Transverse colon (tissue), 4 donors: ENCODE measurements at regions of chr6 and their contacts with region 1.

Region 1: DNA sequence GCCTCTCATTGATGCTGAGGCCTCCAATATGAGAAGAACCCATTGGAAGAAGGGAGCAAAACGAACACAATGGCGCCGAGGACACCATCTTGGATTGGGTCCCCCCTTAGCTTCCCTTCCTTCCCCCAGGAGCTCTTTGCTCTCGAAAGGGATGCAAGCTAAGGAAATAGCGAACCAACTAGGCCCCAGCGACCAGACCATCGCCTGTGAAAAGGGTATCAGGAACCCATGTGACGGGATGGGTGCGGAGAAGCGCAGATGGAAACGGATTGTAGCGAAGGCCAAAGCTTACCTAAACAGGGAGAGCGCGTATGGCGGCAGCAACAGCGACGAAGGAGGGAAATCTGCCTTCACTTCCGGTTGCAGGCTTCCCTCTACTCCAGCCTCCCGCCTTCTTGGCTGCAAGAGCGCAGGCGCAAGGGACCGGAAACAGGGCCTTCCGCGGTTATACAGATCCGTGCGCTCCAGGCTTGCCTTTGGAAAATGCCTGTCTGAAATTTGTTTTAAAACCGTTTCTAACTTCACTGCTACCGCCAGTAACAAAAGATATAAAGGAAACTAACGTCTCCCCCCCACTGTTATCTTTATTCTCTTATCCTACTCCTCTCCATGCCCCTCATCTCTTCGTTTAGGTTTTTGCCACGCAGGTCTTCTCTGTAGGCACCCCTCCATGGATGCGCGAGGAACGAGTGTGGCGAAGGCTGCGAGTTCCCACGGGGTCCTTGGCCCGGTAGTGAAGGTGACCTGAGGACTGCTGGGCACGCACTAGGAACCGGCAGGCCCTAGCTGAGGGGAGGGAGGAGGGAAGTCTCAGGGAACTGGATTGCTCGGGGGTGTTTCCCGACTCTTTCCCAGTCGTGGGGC is at the start of gene DDX39B:
- DNase-seq: peak; percentile 95
- H3K4me3 ChIP-seq: peak within 1 kb of the TSS; percentile 59 to 79 (median 66)
- H3K27ac ChIP-seq: peak within 1 kb of the TSS; percentile 93 to 97 (median 94)
- H3K4me1 ChIP-seq: peaks cover 22 to 41% (median 33%) of the 10 kb centered on the region in 4 donors
- H3K27me3 ChIP-seq: no peaks in the 10 kb centered on the region
- CTCF ChIP-seq: no peak
- EP300 ChIP-seq: no peak
- POLR2A ChIP-seq: peak; percentile 85
- total RNA-seq, gene DDX39B: 147 to 519 (median 271) TPM

Region 2: GRCh38 chr6:31493875-31494694 is 47.8 kb before region 1 on chr6:
- in situ Hi-C with region 1: loop called in 1 of 4 experiments (anchors 10 kb)
- intact Hi-C with region 1: no loop called
- DNase-seq: peak; percentile 89
- H3K4me3 ChIP-seq: peak overlapping the region; percentile 42 to 63 (median 52)
- H3K27ac ChIP-seq: peak overlapping the region; percentile 79 to 88 (median 84)
- H3K4me1 ChIP-seq: peaks cover 0 to 67% (median 17%) of the 10 kb centered on the region in 4 donors
- H3K27me3 ChIP-seq: peaks cover 4% of the 10 kb centered on the region
- CTCF ChIP-seq: peak; percentile 74 to 90 (median 78)
- EP300 ChIP-seq: no peak
- POLR2A ChIP-seq: peak; percentile 60

Region 3: DNA sequence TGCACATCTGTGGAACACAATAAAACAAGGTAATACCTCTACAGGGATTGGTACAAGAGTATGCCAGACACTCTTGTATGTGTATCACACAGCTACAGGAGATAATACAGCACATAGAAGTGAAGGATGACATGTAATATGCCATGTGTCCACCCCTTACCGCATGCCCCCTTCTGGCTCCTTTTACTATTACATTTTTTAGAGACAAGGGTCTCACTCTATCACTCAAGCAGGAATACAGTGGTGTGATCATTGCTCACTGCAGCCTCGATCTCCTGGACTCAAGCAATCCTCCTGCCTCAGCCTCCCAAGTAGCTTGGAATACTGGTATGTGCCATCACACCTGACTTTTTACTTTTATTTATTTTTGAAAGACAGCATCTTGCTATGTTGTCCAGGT is 55.1 kb after region 1 on chr6:
- in situ Hi-C with region 1: loop called in 3 of 4 experiments (anchors 5 to 10 kb)
- intact Hi-C with region 1: loop called (anchors 2 kb)
- DNase-seq: no peak
- H3K4me3 ChIP-seq: no peak overlapping the region
- H3K27ac ChIP-seq: no peak overlapping the region
- H3K4me1 ChIP-seq: no peaks in the 10 kb centered on the region
- H3K27me3 ChIP-seq: no peaks in the 10 kb centered on the region
- CTCF ChIP-seq: peak; percentile 8 to 45 (median 31)
- EP300 ChIP-seq: no peak
- POLR2A ChIP-seq: no peak

Region 4: GRCh38 chr6:32290886-32291450 is 749.1 kb after region 1 on chr6:
- in situ Hi-C with region 1: no loop called
- intact Hi-C with region 1: no loop called
- DNase-seq: no peak
- H3K4me3 ChIP-seq: no peak overlapping the region
- H3K27ac ChIP-seq: no peak overlapping the region
- H3K4me1 ChIP-seq: no peaks in the 10 kb centered on the region
- H3K27me3 ChIP-seq: peaks cover 8% of the 10 kb centered on the region
- CTCF ChIP-seq: no peak
- EP300 ChIP-seq: no peak
- POLR2A ChIP-seq: no peak